ENCODE measurements at regions of chr5 and their contacts with region 1.

Region 1: GRCh38 chr5:157816682-157817386 is 42.1 kb downstream of the CLINT1 start:
- DNase-seq: peak in 1 of 5 donors; percentile 22
- H3K4me3 ChIP-seq: no peak overlapping the region
- H3K4me3 Mint-ChIP-seq: no peak overlapping the region
- H3K27ac ChIP-seq: no peak overlapping the region
- H3K27ac Mint-ChIP-seq: no peak overlapping the region
- H3K4me1 ChIP-seq: no peaks in the 10 kb centered on the region
- H3K4me1 Mint-ChIP-seq: peaks cover 22 to 32% (median 28%) of the 10 kb centered on the region in 3 donors
- H3K27me3 ChIP-seq: no peaks in the 10 kb centered on the region
- H3K27me3 Mint-ChIP-seq: no peaks in the 10 kb centered on the region

Region 2: GRCh38 chr5:157948738-157949410 is 132.0 kb after region 1 on chr5:
- CTCF ChIA-PET with region 1: interaction called, 19 read pairs
- POLR2A ChIA-PET with region 1: no interaction called
- DNase-seq: peak; percentile 56 to 73 (median 63)
- H3K4me3 ChIP-seq: no peak overlapping the region
- H3K4me3 Mint-ChIP-seq: peak overlapping the region in 4 of 7 donors; percentile 2 to 48 (median 42)
- H3K27ac ChIP-seq: no peak overlapping the region
- H3K27ac Mint-ChIP-seq: no peak overlapping the region
- H3K4me1 ChIP-seq: no peaks in the 10 kb centered on the region
- H3K4me1 Mint-ChIP-seq: peaks cover 4 to 6% (median 5%) of the 10 kb centered on the region in 3 donors
- H3K27me3 ChIP-seq: no peaks in the 10 kb centered on the region
- H3K27me3 Mint-ChIP-seq: peaks cover 7 to 39% of the 10 kb centered on the region in 2 donors